Naive thymus-derived CD4-positive, alpha-beta T cell (primary cell): ENCODE measurements at regions of chr2 and their contacts with region 1.

Region 1: GRCh38 chr2:112275306-112275886 is at the start of gene ZC3H6:
- DNase-seq: peak; percentile 96 to 100 (median 100)
- ATAC-seq: peak; percentile 98
- H3K4me3 ChIP-seq: peak within 1 kb of the TSS; percentile 99
- H3K4me3 Mint-ChIP-seq: peak within 1 kb of the TSS; percentile 85 to 95 (median 94)
- H3K27ac ChIP-seq: peak within 1 kb of the TSS; percentile 100
- H3K27ac Mint-ChIP-seq: peak within 1 kb of the TSS; percentile 90 to 99 (median 98)
- H3K4me1 ChIP-seq: peaks cover 14 to 18% of the 10 kb centered on the region in 2 donors
- H3K4me1 Mint-ChIP-seq: peaks cover 9 to 36% (median 25%) of the 10 kb centered on the region in 7 donors
- H3K27me3 ChIP-seq: no peaks in the 10 kb centered on the region
- H3K27me3 Mint-ChIP-seq: peaks cover 0 to 3% (median 0%) of the 10 kb centered on the region in 5 donors
- total RNA-seq, gene ZC3H6: 11.8 to 42.1 (median 23.7) TPM

Region 2: DNA sequence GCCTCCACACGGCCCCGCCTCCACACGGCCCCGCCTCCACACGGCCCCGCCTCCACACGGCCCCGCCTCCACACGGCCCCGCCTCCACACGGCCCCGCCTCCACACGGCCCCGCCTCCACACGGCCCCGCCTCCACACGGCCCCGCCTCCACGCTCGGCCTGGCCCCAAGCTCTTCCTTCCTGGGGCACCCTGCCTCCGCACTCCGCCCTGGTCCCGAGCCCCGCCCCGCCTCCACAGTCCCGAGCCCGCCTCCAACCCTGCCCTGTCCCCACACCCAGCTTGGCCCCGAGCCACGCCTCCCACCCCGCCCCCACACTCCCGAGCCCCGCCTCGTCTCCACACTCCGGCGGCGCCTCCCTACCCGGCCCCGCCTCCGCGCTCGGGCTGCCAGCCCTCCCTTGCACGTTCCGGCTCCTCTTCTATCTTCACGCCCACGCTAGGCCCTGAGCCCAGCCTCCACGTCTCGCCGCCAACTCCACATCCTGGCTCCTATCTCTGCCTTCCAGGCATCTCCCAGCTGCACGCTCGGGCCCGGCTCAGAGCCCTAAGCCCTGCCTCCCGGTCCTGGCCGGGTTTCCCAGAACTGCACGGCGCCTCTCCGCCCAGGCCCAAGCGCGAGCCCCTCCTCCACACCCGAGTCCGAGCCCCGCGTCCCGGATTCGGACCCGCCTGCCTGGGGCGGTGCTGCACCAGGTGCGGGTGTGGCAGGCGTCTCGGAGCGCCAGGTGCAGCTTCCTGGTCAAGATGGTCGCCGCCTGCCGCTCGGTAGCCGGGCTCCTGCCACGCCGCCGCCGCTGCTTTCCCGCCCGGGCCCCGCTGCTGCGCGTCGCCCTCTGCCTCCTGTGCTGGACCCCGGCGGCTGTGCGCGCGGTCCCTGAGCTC is 220.3 kb before region 1 on chr2 and contains the start of gene TMEM87B:
- CTCF ChIA-PET with region 1: no interaction called
- POLR2A ChIA-PET with region 1: interaction called, 4 read pairs
- intact Hi-C with region 1: loop called (anchors 1 kb)
- DNase-seq: peak; percentile 90 to 98 (median 96)
- ATAC-seq: peak; percentile 80
- H3K4me3 ChIP-seq: peak within 1 kb of the TSS; percentile 85
- H3K4me3 Mint-ChIP-seq: peak within 1 kb of the TSS; percentile 80 to 100 (median 95)
- H3K27ac ChIP-seq: peak within 1 kb of the TSS; percentile 82
- H3K27ac Mint-ChIP-seq: peak within 1 kb of the TSS; percentile 92 to 100 (median 98)
- H3K4me1 ChIP-seq: peaks cover 16 to 19% of the 10 kb centered on the region in 2 donors
- H3K4me1 Mint-ChIP-seq: peaks cover 33 to 48% (median 42%) of the 10 kb centered on the region in 7 donors
- H3K27me3 ChIP-seq: no peaks in the 10 kb centered on the region
- H3K27me3 Mint-ChIP-seq: peaks cover 0 to 2% (median 0%) of the 10 kb centered on the region in 5 donors
- total RNA-seq, gene TMEM87B: 14.0 to 26.9 (median 17.4) TPM

Region 3: DNA sequence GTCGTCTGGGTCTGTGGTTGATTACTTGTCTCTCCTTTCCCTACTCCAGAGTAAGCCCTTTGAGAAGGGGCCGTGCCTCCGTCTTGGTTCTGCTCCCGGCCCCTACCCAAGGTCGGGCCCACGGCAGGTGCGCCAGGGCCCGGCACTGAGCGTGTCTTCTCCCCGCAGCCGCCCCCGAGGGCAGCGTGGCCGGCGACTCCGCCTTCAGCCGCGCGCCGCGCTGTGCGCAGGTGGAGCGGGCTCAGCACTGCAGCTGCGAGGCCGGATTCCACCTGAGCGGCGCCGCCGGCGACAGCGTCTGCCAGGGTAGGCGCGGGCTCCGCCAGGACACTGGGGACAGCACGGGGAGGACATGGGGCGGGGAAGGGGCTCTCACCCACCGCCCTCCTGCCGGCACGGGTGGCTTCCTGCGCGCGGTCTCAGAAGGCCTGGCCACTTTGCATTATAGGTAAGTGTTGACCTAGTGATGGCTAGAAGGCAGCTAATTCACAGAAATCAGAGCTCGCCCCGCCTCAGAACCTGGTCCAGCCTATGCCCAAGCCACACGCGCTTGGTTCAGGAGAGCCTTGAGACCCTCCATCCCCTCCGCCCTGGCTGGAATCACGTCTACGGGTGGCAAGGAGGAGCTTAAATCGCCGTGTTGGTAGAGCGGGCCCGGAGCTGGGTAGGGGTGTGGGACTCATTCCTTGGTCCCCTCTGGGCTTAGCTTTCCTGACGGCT is 93.7 kb before region 1 on chr2:
- CTCF ChIA-PET with region 1: interaction called, 3 read pairs
- POLR2A ChIA-PET with region 1: interaction called, 9 read pairs
- intact Hi-C with region 1: loop called in 1 of 2 experiments (anchors 1 kb)
- DNase-seq: peak; percentile 53 to 76 (median 71)
- ATAC-seq: peak; percentile 89
- H3K4me3 ChIP-seq: peak overlapping the region; percentile 71
- H3K4me3 Mint-ChIP-seq: peak overlapping the region; percentile 85 to 94 (median 90)
- H3K27ac ChIP-seq: peak overlapping the region; percentile 89
- H3K27ac Mint-ChIP-seq: peak overlapping the region; percentile 87 to 99 (median 96)
- H3K4me1 ChIP-seq: peaks cover 0 to 32% of the 10 kb centered on the region in 2 donors
- H3K4me1 Mint-ChIP-seq: peaks cover 28 to 71% (median 63%) of the 10 kb centered on the region in 7 donors
- H3K27me3 ChIP-seq: no peaks in the 10 kb centered on the region
- H3K27me3 Mint-ChIP-seq: peaks cover 0 to 11% (median 0%) of the 10 kb centered on the region in 5 donors

Region 4: DNA sequence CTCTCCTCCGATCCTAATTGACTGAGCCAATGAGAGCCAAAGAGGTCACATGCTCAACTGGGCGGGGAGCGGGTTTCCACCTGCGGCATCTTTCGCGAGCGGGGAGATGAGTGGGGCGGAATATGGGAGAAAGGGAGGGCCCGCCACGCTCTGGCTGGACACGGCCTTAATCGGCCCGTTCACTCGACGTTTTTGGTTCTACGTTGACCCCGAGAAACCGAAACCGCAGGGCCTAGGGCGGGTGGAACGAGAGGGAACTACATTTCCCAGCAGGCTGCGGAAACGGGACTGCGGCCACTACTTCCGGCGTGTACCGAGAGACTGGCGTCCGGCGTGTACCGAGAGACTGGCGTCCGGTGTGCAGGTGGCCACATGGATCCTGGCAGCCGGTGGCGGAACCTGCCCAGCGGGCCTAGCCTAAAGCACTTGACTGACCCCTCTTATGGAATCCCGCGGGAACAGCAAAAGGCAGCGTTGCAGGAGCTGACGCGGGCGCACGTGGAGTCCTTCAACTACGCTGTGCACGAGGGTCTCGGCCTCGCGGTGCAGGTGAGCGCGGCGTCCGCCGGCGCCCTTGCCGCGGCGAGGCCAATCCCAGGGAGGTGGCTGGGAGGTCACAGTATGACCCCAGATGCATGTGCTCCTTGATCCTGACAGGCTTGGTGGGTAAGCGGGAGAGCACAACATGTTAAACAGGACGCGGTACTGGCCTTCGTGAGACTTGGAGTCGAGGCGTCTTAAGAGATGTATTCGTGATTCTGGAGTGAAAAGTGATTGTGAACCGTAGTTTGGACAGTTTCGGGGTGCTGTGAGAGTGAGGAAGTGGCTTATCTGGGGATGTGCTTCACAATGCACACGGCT is 267.0 kb after region 1 on chr2 and contains the start of gene POLR1B:
- CTCF ChIA-PET with region 1: no interaction called
- POLR2A ChIA-PET with region 1: interaction called, 3 read pairs
- intact Hi-C with region 1: loop called (anchors 1 to 5 kb)
- DNase-seq: peak in 8 of 9 donors; percentile 57 to 81 (median 77)
- ATAC-seq: peak; percentile 88
- H3K4me3 ChIP-seq: peak within 1 kb of the TSS; percentile 95
- H3K4me3 Mint-ChIP-seq: no peak within 1 kb of the TSS
- H3K27ac ChIP-seq: peak within 1 kb of the TSS; percentile 89
- H3K27ac Mint-ChIP-seq: peak within 1 kb of the TSS in 1 of 9 donors; percentile 98
- H3K4me1 ChIP-seq: peaks cover 14 to 15% of the 10 kb centered on the region in 2 donors
- H3K4me1 Mint-ChIP-seq: peaks cover 12 to 24% (median 19%) of the 10 kb centered on the region in 7 donors
- H3K27me3 ChIP-seq: no peaks in the 10 kb centered on the region
- H3K27me3 Mint-ChIP-seq: no peaks in the 10 kb centered on the region
- total RNA-seq, gene POLR1B: 10.1 to 41.8 (median 25.2) TPM

Region 5: GRCh38 chr2:112577756-112578155 is 302.4 kb after region 1 on chr2:
- CTCF ChIA-PET with region 1: no interaction called
- POLR2A ChIA-PET with region 1: no interaction called
- intact Hi-C with region 1: no loop called
- DNase-seq: no peak
- ATAC-seq: no peak
- H3K4me3 ChIP-seq: no peak overlapping the region
- H3K4me3 Mint-ChIP-seq: no peak overlapping the region
- H3K27ac ChIP-seq: no peak overlapping the region
- H3K27ac Mint-ChIP-seq: no peak overlapping the region
- H3K4me1 ChIP-seq: no peaks in the 10 kb centered on the region
- H3K4me1 Mint-ChIP-seq: peaks cover 0 to 6% (median 2%) of the 10 kb centered on the region in 7 donors
- H3K27me3 ChIP-seq: no peaks in the 10 kb centered on the region
- H3K27me3 Mint-ChIP-seq: no peaks in the 10 kb centered on the region